ENCODE measurements at regions of chr6 and their contacts with region 1.

Region 1: GRCh38 chr6:53171605-53172446 is 23.2 kb upstream of the GCM1 start:
- DNase-seq: peak; percentile 86
- H3K4me3 ChIP-seq: no peak overlapping the region
- H3K27ac ChIP-seq: no peak overlapping the region
- H3K4me1 ChIP-seq: peaks cover 9% of the 10 kb centered on the region
- H3K27me3 ChIP-seq: no peaks in the 10 kb centered on the region
- CTCF ChIP-seq: peak; percentile 100

Region 2: GRCh38 chr6:53410508-53411258 is 238.9 kb after region 1 on chr6:
- intact Hi-C with region 1: loop called (anchors 2 kb)
- DNase-seq: peak; percentile 42
- H3K4me3 ChIP-seq: no peak overlapping the region
- H3K27ac ChIP-seq: no peak overlapping the region
- H3K4me1 ChIP-seq: peaks cover 8% of the 10 kb centered on the region
- H3K27me3 ChIP-seq: no peaks in the 10 kb centered on the region
- CTCF ChIP-seq: peak; percentile 81

Measured in left ventricle myocardium inferior (tissue), 1 donor.